ENCODE measurements at regions of chrX and their contacts with region 1.

Region 1: DNA sequence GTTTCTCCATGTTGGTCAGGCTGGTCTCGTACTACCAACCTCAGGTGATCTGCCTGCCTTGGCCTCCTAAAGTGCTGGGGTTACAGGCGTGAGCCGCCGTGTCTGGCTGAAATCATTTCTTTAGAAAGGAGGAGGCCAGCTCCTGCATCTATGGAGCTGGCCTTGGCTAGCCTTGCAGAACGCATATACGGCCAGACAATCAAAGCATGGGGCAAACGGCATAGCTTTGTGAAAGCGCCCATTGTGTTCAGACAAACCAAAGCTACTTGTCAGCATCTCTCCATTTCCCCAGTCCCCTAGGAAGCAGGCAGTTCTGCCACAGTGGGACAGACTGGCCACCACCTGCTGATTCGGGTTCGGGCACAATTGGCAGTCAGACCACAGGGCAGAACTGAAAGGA is 48.9 kb upstream of the IQSEC2 start:
- DNase-seq: no peak
- H3K4me3 ChIP-seq: no peak overlapping the region
- H3K27ac ChIP-seq: no peak overlapping the region
- H3K4me1 ChIP-seq: no peaks in the 10 kb centered on the region
- H3K27me3 ChIP-seq: peaks cover 30% of the 10 kb centered on the region
- CTCF ChIP-seq: no peak
- POLR2A ChIP-seq: no peak

Region 2: DNA sequence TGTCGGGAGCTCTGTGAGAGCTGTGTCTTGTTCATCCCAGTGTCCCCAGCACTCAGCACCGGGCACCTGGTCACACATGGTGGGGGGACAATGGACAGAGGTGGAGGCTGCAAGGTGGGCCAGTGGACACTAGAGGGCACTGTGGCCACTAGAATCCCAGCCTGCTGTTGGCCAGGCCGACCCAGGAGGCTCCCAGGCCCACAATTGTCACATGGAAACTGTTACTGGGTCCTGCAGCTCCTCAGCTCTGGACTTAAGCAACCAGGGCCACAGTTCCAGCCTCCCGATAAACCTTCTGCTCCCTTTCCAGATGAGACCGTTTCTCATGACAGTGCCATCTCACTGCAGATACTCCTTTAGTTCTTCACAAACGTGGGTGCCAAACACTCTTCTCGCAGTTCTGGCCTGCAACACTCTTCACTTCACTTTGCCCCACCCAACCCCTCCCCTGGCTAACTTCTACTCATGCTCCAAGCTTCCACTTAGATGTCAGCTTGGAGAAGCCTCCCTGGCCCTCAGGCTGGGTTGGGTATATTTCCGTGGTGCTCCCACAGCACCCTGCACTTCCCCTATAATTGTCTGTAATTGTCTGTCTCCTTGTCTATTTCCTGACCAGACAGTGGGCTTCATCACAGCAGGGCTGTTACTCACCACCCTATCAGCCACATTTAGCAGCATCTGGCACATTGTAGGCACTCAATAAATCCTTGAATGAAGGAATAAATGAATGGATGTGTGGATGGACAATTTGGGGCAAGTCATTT is 45.5 kb before region 1 on chrX:
- intact Hi-C with region 1: loop called in 1 of 2 experiments (anchors 5 kb)
- DNase-seq: peak; percentile 59 to 85 (median 69)
- H3K4me3 ChIP-seq: no peak overlapping the region
- H3K27ac ChIP-seq: no peak overlapping the region
- H3K4me1 ChIP-seq: peaks cover 7 to 49% of the 10 kb centered on the region in 2 donors
- H3K27me3 ChIP-seq: peaks cover 13% of the 10 kb centered on the region
- CTCF ChIP-seq: peak; percentile 56 to 85 (median 78)
- POLR2A ChIP-seq: no peak